Activated T-helper 1 cell treated with anti-CD3 and anti-CD28 coated beads, Interleukin-12 subunit alpha, Interleukin-12 subunit beta, Interleukin-2, Interleukin-4 antibody, amounts not matched to agents 30 ng/mL and 10 ng/mL and 1 ng/mL, durations not matched to agents 14 hours and 24 hours and 36 hours (primary cell): ENCODE measurements at regions of chr6 and their contacts with region 1.

Region 1: DNA sequence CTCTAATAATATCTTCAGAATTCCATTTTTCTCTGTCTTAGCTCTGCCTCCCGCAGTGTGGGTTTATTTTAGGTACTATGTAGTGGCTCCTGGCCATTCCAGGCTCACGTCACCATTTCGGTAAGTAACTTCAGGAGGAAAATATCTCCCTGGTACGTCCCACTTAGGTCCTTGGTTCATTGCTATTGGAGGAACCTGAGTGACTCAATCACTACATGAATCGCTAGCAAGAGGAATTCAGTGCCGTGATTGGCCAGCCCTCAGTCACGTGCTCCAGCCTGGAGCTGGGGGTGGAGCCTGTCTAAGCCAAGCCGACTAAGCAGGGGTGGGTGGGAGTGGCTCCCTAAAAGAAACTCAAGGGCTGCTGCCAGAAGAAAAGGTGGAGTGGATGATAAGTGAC is 67.3 kb upstream of the E2F3 start:
- DNase-seq: no peak
- H3K4me3 Mint-ChIP-seq: no peak overlapping the region
- H3K27ac Mint-ChIP-seq: no peak overlapping the region
- H3K4me1 Mint-ChIP-seq: peaks cover 35% of the 10 kb centered on the region
- H3K27me3 Mint-ChIP-seq: peaks cover 5% of the 10 kb centered on the region

Region 2: DNA sequence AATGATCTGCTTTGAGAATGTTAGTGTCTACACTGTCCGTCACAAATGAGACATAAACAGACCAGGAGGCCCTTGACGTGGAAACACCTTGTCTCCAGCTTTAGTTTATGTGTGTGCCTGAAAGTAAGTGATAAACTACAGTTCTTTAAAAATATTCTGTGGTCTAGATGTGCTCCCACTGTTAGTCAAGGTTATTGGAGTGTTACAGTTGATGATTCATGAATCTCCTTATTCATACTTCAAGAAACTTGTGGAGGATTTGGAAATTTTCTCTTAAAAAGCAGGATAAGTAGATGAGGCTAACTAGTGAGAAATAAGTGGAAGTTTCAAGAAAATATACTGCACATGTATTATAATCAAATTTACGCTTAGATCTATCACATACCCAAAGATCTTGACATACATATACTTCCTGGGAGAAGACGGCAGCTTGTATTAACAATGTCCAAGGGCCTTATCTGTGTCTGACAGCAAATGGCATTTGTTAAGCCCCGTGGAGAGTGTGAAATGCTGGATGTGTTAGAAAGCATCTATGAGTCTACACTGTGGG is 31.6 kb before region 1 on chr6:
- intact Hi-C with region 1: no loop called
- DNase-seq: no peak
- H3K4me3 Mint-ChIP-seq: no peak overlapping the region
- H3K27ac Mint-ChIP-seq: no peak overlapping the region
- H3K4me1 Mint-ChIP-seq: no peaks in the 10 kb centered on the region
- H3K27me3 Mint-ChIP-seq: peaks cover 13% of the 10 kb centered on the region

Region 3: DNA sequence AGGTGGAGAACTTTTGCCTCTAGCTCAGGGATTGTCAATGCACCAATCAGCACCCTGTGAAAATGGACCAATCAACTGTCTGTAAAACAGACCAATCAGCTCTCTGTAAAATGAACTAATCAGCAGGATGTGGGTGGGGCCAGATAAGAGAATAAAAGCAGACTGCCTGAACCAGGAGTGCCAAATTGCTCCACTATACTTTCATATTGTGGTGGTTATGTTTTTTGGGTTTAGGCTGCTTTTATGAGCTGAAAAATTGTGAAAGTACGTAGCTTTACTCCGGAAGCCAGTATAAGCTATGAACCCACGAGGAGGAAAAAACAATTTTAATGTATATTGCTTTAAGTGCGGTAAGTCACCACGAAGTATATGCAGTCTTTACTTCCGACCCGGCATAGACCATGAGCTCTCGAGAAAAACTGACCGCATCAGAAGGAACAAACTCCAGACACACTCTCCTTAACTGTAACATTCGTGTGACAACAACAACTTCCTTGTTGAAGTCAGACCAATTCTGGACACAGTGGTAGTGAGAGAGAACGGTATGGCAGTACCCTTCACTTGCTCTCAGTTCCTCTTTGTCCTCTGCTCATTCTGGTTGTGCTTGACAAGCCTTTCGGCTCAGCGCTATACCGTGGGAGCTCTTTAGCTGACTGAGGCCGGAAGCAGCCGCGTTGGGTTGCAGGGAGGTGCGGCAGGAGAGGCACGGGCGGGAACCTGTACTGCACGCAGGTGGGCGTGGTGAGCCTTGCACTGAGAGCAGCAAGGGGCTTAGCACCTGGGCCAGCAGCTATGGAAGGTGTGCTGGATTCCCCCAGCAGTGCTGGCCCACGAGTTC is 14.6 kb before region 1 on chr6:
- intact Hi-C with region 1: loop called (anchors 1 kb)
- DNase-seq: peak; percentile 66
- H3K4me3 Mint-ChIP-seq: peak overlapping the region; percentile 83
- H3K27ac Mint-ChIP-seq: peak overlapping the region; percentile 97
- H3K4me1 Mint-ChIP-seq: peaks cover 17% of the 10 kb centered on the region
- H3K27me3 Mint-ChIP-seq: no peaks in the 10 kb centered on the region

Region 4: DNA sequence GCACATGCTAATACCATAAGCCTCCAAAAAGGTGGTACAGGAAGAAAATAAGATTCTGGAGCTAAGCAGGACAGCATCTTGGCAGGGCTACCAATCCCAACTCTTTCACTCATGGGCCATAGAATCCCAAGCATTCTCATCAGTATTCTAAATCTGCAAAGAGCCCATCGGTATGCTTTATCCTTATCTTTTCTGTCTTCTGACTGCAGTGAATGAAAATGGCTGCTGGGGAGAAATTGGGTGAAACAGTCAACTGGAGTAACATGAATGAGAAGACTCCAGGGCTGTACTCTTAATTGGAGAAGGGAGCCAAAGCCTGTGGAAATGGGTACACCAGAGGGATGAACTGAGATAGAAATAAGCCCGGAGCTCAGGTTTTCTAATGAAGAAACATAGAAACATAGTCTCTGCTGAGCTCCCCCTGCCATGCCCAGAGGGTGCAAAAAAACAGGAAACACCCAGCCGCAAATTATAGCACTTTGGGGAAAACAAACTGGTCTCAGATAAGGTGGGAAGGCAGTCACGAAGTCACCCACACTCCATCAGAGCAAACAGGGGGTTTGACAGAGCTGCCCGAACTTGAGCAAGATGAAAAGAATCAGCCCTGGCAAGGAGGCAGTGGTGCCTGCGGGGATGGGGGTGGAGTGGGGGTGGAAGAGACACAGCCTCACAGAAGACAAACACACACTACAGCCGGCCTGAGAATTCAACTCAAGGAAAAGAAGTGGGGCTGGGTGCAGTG is 31.9 kb after region 1 on chr6:
- intact Hi-C with region 1: loop called (anchors 2 kb)
- DNase-seq: peak; percentile 42
- H3K4me3 Mint-ChIP-seq: peak overlapping the region; percentile 67
- H3K27ac Mint-ChIP-seq: peak overlapping the region; percentile 94
- H3K4me1 Mint-ChIP-seq: peaks cover 58% of the 10 kb centered on the region
- H3K27me3 Mint-ChIP-seq: no peaks in the 10 kb centered on the region